Mammary epithelial cell (primary cell): ENCODE measurements at regions of chr14 and their contacts with region 1.

Region 1: DNA sequence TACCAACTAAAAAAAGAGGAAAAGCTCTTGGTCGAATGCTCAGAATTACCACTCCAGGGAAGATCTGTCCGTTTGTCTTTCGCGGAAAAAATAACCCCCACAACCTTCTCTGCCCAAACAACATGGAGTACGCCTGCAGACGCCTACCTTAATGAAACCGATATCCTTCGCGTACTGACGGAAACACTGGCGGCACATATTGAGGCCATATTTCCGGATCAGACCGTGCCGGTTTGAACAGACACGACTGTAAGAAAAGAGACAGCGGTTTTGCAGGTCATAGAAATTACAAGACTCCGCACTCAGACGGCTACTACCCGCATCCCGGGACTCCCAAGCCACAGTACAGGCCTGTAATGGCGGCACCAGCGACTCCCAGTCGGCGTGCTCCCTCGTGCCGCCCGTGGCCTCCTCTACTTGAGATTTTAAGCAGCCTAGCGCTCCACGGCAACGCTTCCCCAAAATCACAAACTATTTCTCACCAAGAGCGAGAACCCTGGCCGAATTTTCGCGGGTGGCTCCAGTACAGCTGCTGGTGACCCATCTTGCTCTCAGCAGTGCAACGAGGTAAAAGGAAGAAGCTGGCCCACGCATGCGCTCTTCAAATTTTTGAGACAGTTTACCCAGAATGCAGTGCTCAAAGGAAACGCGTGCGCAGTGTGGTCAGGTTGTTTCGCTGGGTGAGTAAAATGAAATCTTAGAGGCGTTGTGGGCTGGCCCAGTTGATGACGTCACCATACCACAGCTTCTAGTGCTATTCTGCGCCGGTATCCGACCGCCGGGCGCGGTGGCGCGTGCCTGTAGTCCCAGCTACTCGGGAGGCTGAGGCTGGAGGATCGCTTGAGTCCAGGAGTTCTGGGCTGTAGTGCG is at the start of gene RPS29:
- DNase-seq: peak; percentile 99
- H3K4me3 ChIP-seq: peak within 1 kb of the TSS; percentile 76 to 99 (median 80)
- H3K27ac ChIP-seq: peak within 1 kb of the TSS; percentile 86
- H3K4me1 ChIP-seq: peaks cover 7% of the 10 kb centered on the region
- H3K27me3 ChIP-seq: no peaks in the 10 kb centered on the region
- CTCF ChIP-seq: no peak
- total RNA-seq, gene RPS29: 1,150 to 1,610 TPM

Region 2: DNA sequence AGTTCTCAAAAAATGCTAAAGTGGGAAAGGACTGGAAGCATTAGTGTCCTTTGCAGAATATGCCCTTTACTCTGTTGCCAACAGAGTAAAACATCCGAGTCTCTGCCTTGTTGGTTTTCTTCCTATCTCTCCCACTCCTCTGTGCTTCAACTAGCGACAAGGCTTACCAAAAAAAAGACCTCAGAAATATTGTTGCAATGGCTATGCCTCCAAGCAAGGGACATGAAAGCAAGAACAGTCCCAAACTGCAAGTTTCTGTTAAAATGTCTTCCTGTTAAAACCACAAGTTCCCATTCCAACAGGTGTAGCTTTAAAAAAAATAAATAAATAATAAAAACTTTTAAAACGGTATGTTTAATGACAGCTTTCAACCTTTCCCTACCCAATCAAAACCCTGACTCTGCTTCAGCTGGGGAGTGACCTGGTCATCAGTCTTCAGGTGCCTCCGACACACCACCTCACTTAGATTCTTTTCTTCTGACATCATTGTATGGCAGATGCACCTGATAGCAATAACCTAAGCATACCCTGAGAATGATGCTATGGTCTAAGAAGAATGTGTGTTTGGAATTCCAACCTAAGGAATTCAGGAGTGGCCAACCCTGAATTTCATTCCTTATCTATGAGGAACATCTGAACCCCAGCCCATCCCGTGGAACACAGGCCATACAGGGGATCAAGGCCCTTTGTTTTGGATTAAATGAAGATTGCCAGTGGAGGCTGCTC is 80.8 kb before region 1 on chr14:
- CTCF ChIA-PET with region 1: no interaction called
- dilution Hi-C with region 1: no loop called
- in situ Hi-C with region 1: no loop called
- intact Hi-C with region 1: loop called (anchors 2 kb)
- DNase-seq: peak; percentile 85
- H3K4me3 ChIP-seq: no peak overlapping the region
- H3K27ac ChIP-seq: peak overlapping the region; percentile 63
- H3K4me1 ChIP-seq: peaks cover 21% of the 10 kb centered on the region
- H3K27me3 ChIP-seq: no peaks in the 10 kb centered on the region
- CTCF ChIP-seq: no peak

Region 3: GRCh38 chr14:49512147-49512551 is 73.9 kb before region 1 on chr14:
- CTCF ChIA-PET with region 1: no interaction called
- dilution Hi-C with region 1: no loop called
- in situ Hi-C with region 1: no loop called
- intact Hi-C with region 1: loop called (anchors 2 kb)
- DNase-seq: peak; percentile 94
- H3K4me3 ChIP-seq: no peak overlapping the region
- H3K27ac ChIP-seq: peak overlapping the region; percentile 83
- H3K4me1 ChIP-seq: peaks cover 24% of the 10 kb centered on the region
- H3K27me3 ChIP-seq: no peaks in the 10 kb centered on the region
- CTCF ChIP-seq: no peak

Region 4: DNA sequence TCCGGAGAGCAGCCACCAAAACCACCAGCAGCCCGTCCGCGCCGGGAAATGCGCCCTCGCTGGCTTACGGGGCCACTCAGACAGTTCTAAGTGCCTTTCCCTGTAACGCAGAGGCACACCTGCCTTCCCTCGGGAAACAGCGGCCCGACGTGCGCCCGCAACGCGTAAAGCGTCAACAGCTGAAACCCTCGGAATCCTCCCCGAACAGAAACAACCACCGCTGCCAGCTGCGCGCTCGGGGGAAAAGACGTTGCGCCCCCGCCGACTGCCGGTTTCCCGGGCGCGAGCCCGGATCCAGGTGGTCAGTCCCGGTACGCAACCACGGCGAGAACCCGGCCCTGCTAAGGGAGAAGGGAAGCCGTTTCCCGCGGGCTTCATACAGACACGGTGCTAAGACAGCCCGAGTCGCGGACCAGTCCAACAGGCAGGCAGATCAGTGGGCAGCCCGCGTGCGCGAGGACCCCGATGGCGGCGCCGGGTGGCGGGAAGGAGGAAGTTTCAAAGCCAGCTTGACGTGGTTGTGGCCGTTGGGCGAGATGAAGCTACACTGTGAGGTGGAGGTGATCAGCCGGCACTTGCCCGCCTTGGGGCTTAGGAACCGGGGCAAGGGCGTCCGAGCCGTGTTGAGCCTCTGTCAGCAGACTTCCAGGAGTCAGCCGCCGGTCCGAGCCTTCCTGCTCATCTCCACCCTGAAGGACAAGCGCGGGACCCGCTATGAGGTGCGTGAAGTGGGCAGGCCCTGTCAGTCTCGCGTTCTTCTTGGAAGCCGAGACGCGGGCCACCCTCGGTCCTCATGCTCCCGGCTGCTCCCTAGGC is 12.7 kb after region 1 on chr14 and contains the start of gene LRR1:
- CTCF ChIA-PET with region 1: interaction called, 3 read pairs
- dilution Hi-C with region 1: no loop called
- in situ Hi-C with region 1: no loop called
- intact Hi-C with region 1: loop called (anchors 1 kb)
- DNase-seq: peak; percentile 86
- H3K4me3 ChIP-seq: peak within 1 kb of the TSS; percentile 65 to 87 (median 79)
- H3K27ac ChIP-seq: peak within 1 kb of the TSS; percentile 88
- H3K4me1 ChIP-seq: peaks cover 3% of the 10 kb centered on the region
- H3K27me3 ChIP-seq: no peaks in the 10 kb centered on the region
- CTCF ChIP-seq: no peak
- total RNA-seq, gene LRR1: 8.3 to 20.7 TPM

Region 5: GRCh38 chr14:49620182-49621113 is 34.4 kb after region 1 on chr14 and contains the starts of genes MGAT2 and RPL36AL:
- CTCF ChIA-PET with region 1: no interaction called
- dilution Hi-C with region 1: no loop called
- in situ Hi-C with region 1: no loop called
- intact Hi-C with region 1: loop called (anchors 1 kb)
- DNase-seq: peak; percentile 98
- H3K4me3 ChIP-seq: peak within 1 kb of the TSS; percentile 97 to 100 (median 98)
- H3K27ac ChIP-seq: peak within 1 kb of the TSS; percentile 96
- H3K4me1 ChIP-seq: peaks cover 40% of the 10 kb centered on the region
- H3K27me3 ChIP-seq: no peaks in the 10 kb centered on the region
- CTCF ChIP-seq: peak in 1 of 2 donors; percentile 39
- total RNA-seq, gene MGAT2: 40.5 to 41.8 TPM
- total RNA-seq, gene RPL36AL: 78.7 to 214 TPM

Region 6: DNA sequence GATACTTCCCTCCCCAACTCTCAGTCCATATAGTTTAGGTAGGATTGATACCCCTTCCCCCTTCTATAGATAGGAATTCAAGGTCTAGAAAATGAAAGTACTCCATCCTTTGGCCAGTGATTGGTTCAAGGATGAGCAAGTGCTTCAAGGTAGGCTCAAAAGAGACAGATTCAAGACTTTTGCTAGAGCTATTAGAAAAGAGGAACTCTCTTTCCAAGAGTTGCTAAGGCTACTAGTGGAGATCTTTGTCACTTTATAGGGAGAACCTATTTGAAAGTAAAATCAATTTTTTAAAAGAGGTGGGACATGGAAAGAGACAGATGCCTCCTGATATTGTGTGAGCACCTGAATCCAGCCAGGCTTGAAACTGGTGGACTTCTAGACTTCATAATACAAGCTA is 84.4 kb after region 1 on chr14:
- CTCF ChIA-PET with region 1: interaction called, 17 read pairs
- dilution Hi-C with region 1: no loop called
- in situ Hi-C with region 1: no loop called
- intact Hi-C with region 1: no loop called
- DNase-seq: no peak
- H3K4me3 ChIP-seq: no peak overlapping the region
- H3K27ac ChIP-seq: no peak overlapping the region
- H3K4me1 ChIP-seq: no peaks in the 10 kb centered on the region
- H3K27me3 ChIP-seq: no peaks in the 10 kb centered on the region
- CTCF ChIP-seq: no peak

Region 7: DNA sequence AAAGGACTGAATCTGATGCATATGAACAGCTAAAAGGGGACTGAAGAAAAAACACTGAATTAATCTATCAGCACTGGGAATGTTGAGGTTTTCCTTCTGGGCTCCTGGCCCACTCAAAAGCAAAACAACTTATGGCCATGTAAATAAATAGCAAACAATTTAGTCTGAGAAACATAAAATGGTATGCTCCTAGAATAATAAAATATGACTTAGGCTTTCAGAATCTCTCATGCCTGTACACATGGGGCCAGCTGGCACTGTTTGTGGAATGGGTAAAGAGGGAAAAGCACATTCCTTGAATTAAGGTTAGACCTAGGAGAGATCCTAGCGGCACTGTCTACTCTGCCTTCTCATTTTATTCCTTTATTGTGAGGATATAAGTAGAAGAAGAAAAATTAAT is 188.1 kb after region 1 on chr14:
- CTCF ChIA-PET with region 1: no interaction called
- dilution Hi-C with region 1: no loop called
- in situ Hi-C with region 1: no loop called
- intact Hi-C with region 1: no loop called
- DNase-seq: no peak
- H3K4me3 ChIP-seq: no peak overlapping the region
- H3K27ac ChIP-seq: no peak overlapping the region
- H3K4me1 ChIP-seq: peaks cover 12% of the 10 kb centered on the region
- H3K27me3 ChIP-seq: no peaks in the 10 kb centered on the region
- CTCF ChIP-seq: no peak